ENCODE measurements at regions of chr6 and their contacts with region 1.

Region 1: DNA sequence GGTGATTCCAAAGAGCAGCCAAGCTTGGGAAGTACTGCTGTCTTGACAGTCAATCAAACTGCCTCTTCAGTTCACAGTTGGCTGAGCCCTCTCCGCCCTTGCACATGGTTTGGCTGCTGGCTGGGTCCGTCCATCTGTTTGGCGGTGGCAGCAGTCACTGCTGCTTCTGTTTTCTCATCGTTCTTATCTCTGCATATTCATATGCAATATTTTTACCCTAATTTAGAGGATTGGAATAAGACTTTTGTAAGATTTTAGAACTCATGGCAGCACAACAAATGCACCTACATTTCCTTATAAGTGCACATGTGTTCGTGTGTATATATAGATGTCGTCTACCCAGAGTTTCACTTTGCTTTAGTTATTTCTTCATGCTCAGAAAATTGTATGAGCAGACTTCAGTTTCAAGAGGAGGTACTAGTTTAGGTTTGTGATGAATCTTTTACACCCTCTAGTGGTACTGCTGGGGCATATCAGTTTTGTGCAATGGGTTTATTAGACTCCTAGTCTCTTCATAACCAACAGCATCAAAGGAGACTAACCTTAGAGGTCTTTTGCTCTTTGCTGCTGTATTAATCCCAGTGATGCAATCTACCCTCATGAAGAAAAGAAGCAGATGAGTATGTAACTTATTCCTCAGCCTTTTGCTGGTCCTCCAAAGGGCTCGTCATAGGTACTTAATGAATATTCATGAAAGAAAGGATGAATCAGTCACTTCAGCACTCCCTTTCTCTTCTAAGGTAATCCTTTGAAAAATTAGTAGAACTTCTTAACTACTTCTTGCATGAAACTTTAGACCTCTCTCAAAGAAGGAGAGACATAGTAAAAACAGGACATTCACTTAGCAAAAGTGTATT is 44.3 kb downstream of the KHDC1L start:
- DNase-seq: peak; percentile 25 to 55
- ATAC-seq: peak; percentile 91 to 96
- H3K4me3 ChIP-seq: no peak overlapping the region; the same call in 2 of the 3 replicates
- H3K27ac ChIP-seq: 0 out of 6 replicates have a peak overlapping the region, but pooled peaks of 1 of the 2 experiments have one; percentile 24
- H3K4me1 ChIP-seq: no peaks in the 10 kb centered on the region
- CTCF ChIP-seq: peak; percentile 76
- EP300 ChIP-seq: no peak
- POLR2A ChIP-seq: no peak
- RAD21 ChIP-seq: peak; percentile 78 to 81

Region 2: DNA sequence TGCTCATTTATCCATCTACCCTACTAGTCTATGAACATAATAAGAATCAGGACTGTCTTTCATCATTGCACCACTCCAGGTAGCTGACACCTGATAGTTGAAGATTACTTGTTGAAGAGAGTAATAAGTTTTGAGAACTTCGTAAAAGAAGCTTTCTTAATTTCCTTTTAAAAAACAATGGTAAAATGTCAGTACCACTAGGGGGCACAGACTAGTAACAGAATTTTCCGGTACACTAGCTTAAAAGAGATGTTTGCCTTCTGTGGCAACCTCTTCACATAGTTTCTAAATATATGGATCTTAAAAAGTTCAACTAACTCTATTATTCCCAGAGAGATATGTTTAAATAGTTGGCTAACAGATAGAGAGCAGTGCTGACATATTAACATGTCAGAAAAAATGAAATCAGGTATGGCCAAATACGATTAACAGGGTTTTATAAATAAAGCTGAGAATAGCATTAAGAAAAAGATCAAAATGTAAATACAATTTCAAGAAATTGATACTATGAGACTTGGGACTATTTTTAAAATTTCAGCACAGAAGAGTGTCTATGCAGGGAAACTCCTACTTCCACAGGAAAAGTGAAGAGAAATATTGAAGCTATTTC is 564.5 kb before region 1 on chr6:
- CTCF ChIA-PET with region 1: interaction called, 16 read pairs
- POLR2A ChIA-PET with region 1: no interaction called
- DNase-seq: peak in 1 of 2 experiments; percentile 31
- ATAC-seq: no peak
- H3K4me3 ChIP-seq: no peak overlapping the region
- H3K27ac ChIP-seq: no peak overlapping the region
- H3K4me1 ChIP-seq: no peaks in the 10 kb centered on the region
- CTCF ChIP-seq: peak; percentile 64
- EP300 ChIP-seq: no peak
- POLR2A ChIP-seq: no peak
- RAD21 ChIP-seq: peak; percentile 64 to 65

Region 3: GRCh38 chr6:73854998-73855718 is 674.2 kb after region 1 on chr6:
- CTCF ChIA-PET with region 1: no interaction called
- POLR2A ChIA-PET with region 1: no interaction called
- DNase-seq: peak; percentile 1 to 58
- ATAC-seq: no peak
- H3K4me3 ChIP-seq: no peak overlapping the region
- H3K27ac ChIP-seq: no peak overlapping the region
- H3K4me1 ChIP-seq: no peaks in the 10 kb centered on the region
- CTCF ChIP-seq: peak; percentile 70
- EP300 ChIP-seq: no peak
- POLR2A ChIP-seq: no peak
- RAD21 ChIP-seq: peak; percentile 58 to 61

Measured in A549 (cell line).